HepG2 (cell line): ENCODE measurements at regions of chrX and their contacts with region 1.

Region 1: DNA sequence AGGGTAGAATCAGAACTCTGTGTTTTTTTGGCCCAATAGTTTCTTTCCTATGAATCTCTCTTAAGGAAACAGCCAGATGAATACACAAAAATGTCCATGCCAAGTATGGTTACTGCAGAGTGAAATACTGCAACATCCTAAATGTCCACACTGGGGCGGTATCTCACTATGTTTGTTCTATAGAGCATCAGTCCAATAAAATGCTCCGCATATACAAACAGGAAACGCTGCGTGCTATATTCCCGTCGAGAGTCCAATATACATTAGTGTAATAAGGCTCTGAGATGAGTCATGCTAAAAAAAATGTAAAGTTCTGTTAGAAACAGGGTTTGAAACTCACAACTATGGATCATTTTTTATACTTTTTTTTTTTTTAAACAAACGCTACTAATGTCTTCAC is 72.9 kb upstream of the ENOX2 start:
- DNase-seq: peak; percentile 24
- ATAC-seq: peak; percentile 76
- H3K4me3 ChIP-seq: no peak overlapping the region
- H3K27ac ChIP-seq: no peak overlapping the region
- H3K4me1 ChIP-seq: no peaks in the 10 kb centered on the region
- H3K27me3 ChIP-seq: no peaks in the 10 kb centered on the region
- CTCF ChIP-seq: peak; percentile 57
- EP300 ChIP-seq: no peak
- POLR2A ChIP-seq: no peak
- RAD21 ChIP-seq: peak; percentile 36; the same call in 1 of the 2 replicates

Region 2: DNA sequence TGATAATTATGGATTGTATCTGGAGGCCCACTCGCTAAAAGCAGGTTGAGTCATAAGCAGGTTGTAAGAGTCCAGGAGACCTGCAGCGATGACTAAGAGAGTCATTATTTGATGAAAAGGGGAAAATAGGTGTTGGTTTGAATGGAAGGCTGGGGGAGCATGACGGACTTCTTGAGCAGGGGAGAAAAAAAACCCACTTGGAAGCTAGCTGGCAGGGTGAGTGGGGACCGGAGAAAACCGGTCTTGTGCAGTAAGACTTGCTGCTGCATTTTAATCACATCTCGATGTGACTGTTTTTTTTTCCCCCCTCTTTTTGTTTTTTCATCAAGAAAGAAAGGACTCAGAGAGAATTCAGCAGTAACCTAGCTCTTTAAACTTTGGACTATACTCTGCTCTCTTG is 223.1 kb after region 1 on chrX:
- CTCF ChIA-PET with region 1: no interaction called
- POLR2A ChIA-PET with region 1: no interaction called
- in situ Hi-C with region 1: no loop called
- intact Hi-C with region 1: no loop called
- DNase-seq: no peak
- ATAC-seq: no peak
- H3K4me3 ChIP-seq: no peak overlapping the region
- H3K27ac ChIP-seq: no peak overlapping the region
- H3K4me1 ChIP-seq: peaks cover 42% of the 10 kb centered on the region
- H3K27me3 ChIP-seq: no peaks in the 10 kb centered on the region
- CTCF ChIP-seq: no peak
- EP300 ChIP-seq: no peak
- POLR2A ChIP-seq: no peak
- RAD21 ChIP-seq: no peak

Region 3: DNA sequence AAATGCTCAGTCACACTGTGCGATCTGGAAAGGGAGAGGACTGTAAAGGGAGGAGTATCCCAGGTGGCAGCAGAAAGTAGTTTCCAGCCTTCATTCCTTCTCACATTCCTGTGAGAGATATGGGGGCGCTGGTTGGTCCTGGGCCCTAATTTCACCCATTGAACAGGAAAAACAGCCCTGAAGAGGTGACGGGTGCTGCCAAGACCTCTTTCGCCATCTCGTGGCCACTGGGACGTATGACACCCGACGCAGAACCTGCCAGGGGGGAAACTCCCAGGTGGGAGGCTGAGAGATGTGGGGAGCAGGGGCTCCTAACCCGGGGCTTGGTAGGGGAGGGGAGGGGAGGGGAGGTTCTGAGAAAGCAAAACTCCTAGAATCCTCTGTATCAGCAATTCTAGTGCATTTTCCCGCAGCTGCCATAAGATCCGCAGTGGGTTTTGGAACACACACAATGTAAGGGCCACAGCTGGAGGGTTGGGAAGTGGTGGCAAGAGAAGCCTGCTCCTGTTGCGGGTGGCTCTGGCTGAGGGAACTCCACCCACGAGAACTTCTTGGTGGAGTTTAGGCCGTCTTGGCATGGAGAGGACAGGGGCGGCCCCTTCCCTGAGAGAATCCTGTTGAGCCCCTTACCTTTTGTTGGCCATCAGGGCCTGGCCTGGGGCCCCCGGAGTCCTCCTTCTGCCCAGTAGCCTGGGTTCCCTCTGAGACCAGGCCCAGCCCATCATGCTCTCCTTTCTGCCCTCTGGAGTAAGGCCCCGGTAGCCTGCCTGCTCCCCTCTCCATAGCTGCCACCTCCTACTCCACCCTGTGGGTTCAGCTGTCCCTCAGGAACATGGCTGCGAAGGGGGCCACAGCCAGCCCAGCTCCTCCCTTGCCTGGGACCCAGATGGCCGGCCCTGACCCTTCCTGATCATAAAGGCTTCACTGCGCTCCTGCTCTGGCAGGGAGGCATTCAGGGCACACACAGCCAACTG is 702.0 kb after region 1 on chrX:
- CTCF ChIA-PET with region 1: interaction called, 9 read pairs
- POLR2A ChIA-PET with region 1: no interaction called
- in situ Hi-C with region 1: no loop called
- intact Hi-C with region 1: loop called (anchors 2 kb)
- DNase-seq: peak; percentile 18
- ATAC-seq: peak; percentile 81
- H3K4me3 ChIP-seq: no peak overlapping the region
- H3K27ac ChIP-seq: no peak overlapping the region
- H3K4me1 ChIP-seq: no peaks in the 10 kb centered on the region
- H3K27me3 ChIP-seq: no peaks in the 10 kb centered on the region
- CTCF ChIP-seq: peak; percentile 70
- EP300 ChIP-seq: no peak
- POLR2A ChIP-seq: no peak
- RAD21 ChIP-seq: 0 out of 2 replicates have a peak, but pooled peaks have one; percentile 17